CD4-positive, alpha-beta memory T cell (primary cell): ENCODE measurements at regions of chr7 and their contacts with region 1.

Region 1: DNA sequence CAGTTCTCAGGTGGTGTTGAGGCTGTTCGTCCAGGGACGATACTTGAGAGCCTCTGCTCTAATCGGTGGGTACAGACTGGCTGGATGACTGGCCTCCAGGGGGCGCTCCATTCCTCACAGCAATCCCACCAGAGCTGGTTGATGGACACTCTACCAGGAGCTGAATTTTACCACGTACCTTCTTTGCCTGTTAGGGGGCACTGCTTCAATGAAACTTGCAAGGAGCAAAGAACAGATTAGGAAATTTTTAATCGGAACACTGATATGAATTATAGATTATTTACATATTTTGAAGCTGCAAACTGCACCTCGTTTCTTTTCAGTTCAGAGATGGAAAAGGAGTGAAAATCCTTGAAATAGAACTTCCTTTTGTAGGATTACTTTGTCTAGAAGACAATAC is 44.9 kb downstream of the KBTBD2 start:
- DNase-seq: peak; percentile 83 to 86 (median 84)
- H3K4me3 ChIP-seq: no peak overlapping the region
- H3K4me3 Mint-ChIP-seq: peak overlapping the region in 4 of 8 donors; percentile 33 to 50 (median 44)
- H3K27ac ChIP-seq: no peak overlapping the region
- H3K27ac Mint-ChIP-seq: peak overlapping the region in 4 of 7 donors; percentile 1 to 65 (median 50)
- H3K4me1 ChIP-seq: no peaks in the 10 kb centered on the region
- H3K4me1 Mint-ChIP-seq: peaks cover 5 to 7% (median 6%) of the 10 kb centered on the region in 4 donors
- H3K27me3 ChIP-seq: no peaks in the 10 kb centered on the region
- H3K27me3 Mint-ChIP-seq: peaks cover 12 to 19% of the 10 kb centered on the region in 2 donors

Region 2: DNA sequence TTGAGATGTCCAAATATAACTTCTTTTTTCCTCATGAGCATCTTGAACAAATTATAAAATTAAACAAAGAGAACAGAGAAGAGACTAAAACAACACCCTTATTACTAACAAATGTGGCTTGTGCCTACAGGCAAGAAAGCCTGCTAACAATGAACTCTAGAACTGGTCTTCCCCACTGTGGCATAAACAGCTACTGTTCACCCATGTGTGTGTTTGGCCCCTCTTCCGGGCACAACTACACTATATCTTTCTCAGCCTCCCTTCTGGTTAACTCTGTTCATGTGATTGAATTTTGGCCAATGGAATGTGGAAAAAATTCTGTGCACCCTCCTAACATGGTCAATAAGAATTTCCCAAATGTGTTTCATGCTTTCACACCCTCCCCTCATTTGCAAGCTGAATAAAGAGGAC is 72.2 kb before region 1 on chr7:
- CTCF ChIA-PET with region 1: no interaction called
- POLR2A ChIA-PET with region 1: no interaction called
- intact Hi-C with region 1: no loop called
- DNase-seq: no peak
- H3K4me3 ChIP-seq: no peak overlapping the region
- H3K4me3 Mint-ChIP-seq: no peak overlapping the region
- H3K27ac ChIP-seq: no peak overlapping the region
- H3K27ac Mint-ChIP-seq: no peak overlapping the region
- H3K4me1 ChIP-seq: no peaks in the 10 kb centered on the region
- H3K4me1 Mint-ChIP-seq: no peaks in the 10 kb centered on the region
- H3K27me3 ChIP-seq: no peaks in the 10 kb centered on the region
- H3K27me3 Mint-ChIP-seq: peaks cover 8 to 15% of the 10 kb centered on the region in 2 donors

Region 3: GRCh38 chr7:32803406-32804141 is 43.1 kb before region 1 on chr7:
- CTCF ChIA-PET with region 1: interaction called, 9 read pairs
- POLR2A ChIA-PET with region 1: no interaction called
- intact Hi-C with region 1: loop called (anchors 2 kb)
- DNase-seq: no peak
- H3K4me3 ChIP-seq: no peak overlapping the region
- H3K4me3 Mint-ChIP-seq: no peak overlapping the region
- H3K27ac ChIP-seq: no peak overlapping the region
- H3K27ac Mint-ChIP-seq: no peak overlapping the region
- H3K4me1 ChIP-seq: no peaks in the 10 kb centered on the region
- H3K4me1 Mint-ChIP-seq: no peaks in the 10 kb centered on the region
- H3K27me3 ChIP-seq: no peaks in the 10 kb centered on the region
- H3K27me3 Mint-ChIP-seq: peaks cover 0 to 1% of the 10 kb centered on the region in 2 donors

Region 4: DNA sequence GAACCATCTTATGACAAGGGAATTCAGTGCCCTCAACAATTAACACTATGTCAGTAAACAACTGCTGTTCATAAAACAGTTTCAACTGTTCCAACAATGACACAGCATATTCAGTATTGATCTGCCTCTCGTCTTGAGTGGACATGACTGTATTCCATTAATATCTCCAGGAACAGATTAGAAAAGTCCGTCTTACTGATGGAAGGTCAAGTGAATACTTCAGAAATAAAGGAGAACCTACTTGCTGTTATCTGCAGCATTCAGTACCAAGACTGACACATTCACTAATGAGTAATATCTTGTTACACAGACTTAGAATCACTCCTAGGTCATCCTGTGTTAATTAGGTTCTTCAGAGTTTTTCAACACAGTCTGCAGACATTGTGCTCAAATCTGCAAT is 32.8 kb after region 1 on chr7:
- CTCF ChIA-PET with region 1: interaction called, 47 read pairs
- POLR2A ChIA-PET with region 1: no interaction called
- intact Hi-C with region 1: no loop called
- DNase-seq: no peak
- H3K4me3 ChIP-seq: no peak overlapping the region
- H3K4me3 Mint-ChIP-seq: peak overlapping the region in 4 of 8 donors; percentile 15 to 30 (median 28)
- H3K27ac ChIP-seq: no peak overlapping the region
- H3K27ac Mint-ChIP-seq: peak overlapping the region in 4 of 7 donors; percentile 1 to 46 (median 11)
- H3K4me1 ChIP-seq: peaks cover 52% of the 10 kb centered on the region
- H3K4me1 Mint-ChIP-seq: peaks cover 36 to 68% (median 55%) of the 10 kb centered on the region in 4 donors
- H3K27me3 ChIP-seq: no peaks in the 10 kb centered on the region
- H3K27me3 Mint-ChIP-seq: no peaks in the 10 kb centered on the region

Region 5: DNA sequence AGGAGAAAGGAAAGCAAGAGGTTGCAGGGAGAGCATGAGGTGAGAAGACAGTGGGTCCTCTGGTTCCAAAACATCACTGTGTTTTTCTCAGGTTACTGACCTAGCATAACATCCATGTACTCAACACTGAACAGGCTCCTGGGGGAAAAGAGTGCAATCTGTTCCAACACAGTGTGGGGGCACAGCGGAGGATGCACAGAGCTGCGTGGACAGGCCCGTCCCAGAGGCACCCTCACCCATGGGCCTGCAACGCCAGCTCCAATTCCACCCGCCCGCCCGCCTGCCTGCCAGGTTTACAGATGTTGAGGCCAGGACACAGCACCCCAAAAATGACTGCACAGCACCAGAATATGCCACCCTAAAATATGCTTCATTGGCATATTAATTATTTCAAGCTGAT is 83.7 kb after region 1 on chr7:
- CTCF ChIA-PET with region 1: interaction called, 14 read pairs
- POLR2A ChIA-PET with region 1: no interaction called
- intact Hi-C with region 1: no loop called
- DNase-seq: no peak
- H3K4me3 ChIP-seq: no peak overlapping the region
- H3K4me3 Mint-ChIP-seq: no peak overlapping the region
- H3K27ac ChIP-seq: no peak overlapping the region
- H3K27ac Mint-ChIP-seq: peak overlapping the region in 1 of 7 donors; percentile 24
- H3K4me1 ChIP-seq: no peaks in the 10 kb centered on the region
- H3K4me1 Mint-ChIP-seq: peaks cover 0 to 4% (median 0%) of the 10 kb centered on the region in 4 donors
- H3K27me3 ChIP-seq: no peaks in the 10 kb centered on the region
- H3K27me3 Mint-ChIP-seq: no peaks in the 10 kb centered on the region

Region 6: GRCh38 chr7:33040803-33041516 is 194.3 kb after region 1 on chr7:
- CTCF ChIA-PET with region 1: interaction called, 20 read pairs
- POLR2A ChIA-PET with region 1: no interaction called
- intact Hi-C with region 1: no loop called
- DNase-seq: peak; percentile 70 to 90 (median 81)
- H3K4me3 ChIP-seq: peak overlapping the region; percentile 6 to 52
- H3K4me3 Mint-ChIP-seq: peak overlapping the region; percentile 75 to 92 (median 84)
- H3K27ac ChIP-seq: peak overlapping the region; percentile 64
- H3K27ac Mint-ChIP-seq: peak overlapping the region; percentile 88 to 97 (median 94)
- H3K4me1 ChIP-seq: peaks cover 72% of the 10 kb centered on the region
- H3K4me1 Mint-ChIP-seq: peaks cover 34 to 71% (median 53%) of the 10 kb centered on the region in 4 donors
- H3K27me3 ChIP-seq: no peaks in the 10 kb centered on the region
- H3K27me3 Mint-ChIP-seq: no peaks in the 10 kb centered on the region

Region 7: DNA sequence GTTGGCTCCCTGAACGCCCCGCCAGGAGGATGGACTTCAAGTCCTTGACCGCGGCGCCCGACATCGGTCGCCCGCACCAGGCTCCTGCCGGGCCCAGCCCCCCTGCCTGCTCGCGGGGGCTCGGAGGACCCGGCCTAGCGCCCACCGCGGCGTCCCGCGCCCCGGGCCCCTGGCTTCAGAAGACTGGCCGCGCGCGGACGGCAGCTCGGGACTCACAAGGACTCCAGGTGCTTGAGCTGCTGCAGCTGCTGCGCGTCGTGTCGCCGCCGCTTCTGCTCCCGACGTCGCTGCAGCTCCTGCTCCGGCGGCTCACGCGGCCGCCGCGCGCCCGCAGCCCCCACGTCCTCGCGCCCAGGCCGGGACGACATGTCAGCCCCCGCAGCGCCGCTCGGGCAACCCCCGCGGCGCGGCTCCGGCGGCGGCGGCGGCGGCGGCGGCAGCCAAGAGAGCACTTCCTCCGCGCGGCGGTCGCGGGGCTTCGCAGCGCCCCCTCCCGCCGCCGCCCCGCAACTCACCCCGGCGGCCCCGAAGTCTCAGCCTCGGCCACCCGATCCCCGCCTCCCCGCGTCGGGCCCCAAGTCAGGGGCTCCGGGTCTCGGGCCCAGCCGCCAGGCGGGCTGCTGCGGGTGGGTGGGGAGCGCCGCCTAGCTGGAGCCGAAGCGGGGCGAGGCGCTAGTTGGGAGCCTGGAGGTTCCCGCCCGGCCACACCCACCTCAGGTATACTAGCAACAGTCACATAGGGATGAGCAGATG is 262.5 kb after region 1 on chr7 and contains the start of gene RP9:
- CTCF ChIA-PET with region 1: interaction called, 52 read pairs
- POLR2A ChIA-PET with region 1: interaction called, 3 read pairs
- intact Hi-C with region 1: loop called (anchors 1 kb)
- DNase-seq: peak; percentile 74 to 83 (median 78)
- H3K4me3 ChIP-seq: peak within 1 kb of the TSS; percentile 25 to 59
- H3K4me3 Mint-ChIP-seq: peak within 1 kb of the TSS; percentile 78 to 95 (median 86)
- H3K27ac ChIP-seq: peak within 1 kb of the TSS; percentile 80
- H3K27ac Mint-ChIP-seq: peak within 1 kb of the TSS; percentile 49 to 93 (median 81)
- H3K4me1 ChIP-seq: peaks cover 38% of the 10 kb centered on the region
- H3K4me1 Mint-ChIP-seq: peaks cover 21 to 49% (median 36%) of the 10 kb centered on the region in 4 donors
- H3K27me3 ChIP-seq: no peaks in the 10 kb centered on the region
- H3K27me3 Mint-ChIP-seq: peaks cover 6 to 8% of the 10 kb centered on the region in 2 donors
- total RNA-seq, gene RP9: 17.5 to 17.7 TPM